Aorta (tissue), 5 donors: ENCODE measurements at regions of chr4 and their contacts with region 1.

Region 1: DNA sequence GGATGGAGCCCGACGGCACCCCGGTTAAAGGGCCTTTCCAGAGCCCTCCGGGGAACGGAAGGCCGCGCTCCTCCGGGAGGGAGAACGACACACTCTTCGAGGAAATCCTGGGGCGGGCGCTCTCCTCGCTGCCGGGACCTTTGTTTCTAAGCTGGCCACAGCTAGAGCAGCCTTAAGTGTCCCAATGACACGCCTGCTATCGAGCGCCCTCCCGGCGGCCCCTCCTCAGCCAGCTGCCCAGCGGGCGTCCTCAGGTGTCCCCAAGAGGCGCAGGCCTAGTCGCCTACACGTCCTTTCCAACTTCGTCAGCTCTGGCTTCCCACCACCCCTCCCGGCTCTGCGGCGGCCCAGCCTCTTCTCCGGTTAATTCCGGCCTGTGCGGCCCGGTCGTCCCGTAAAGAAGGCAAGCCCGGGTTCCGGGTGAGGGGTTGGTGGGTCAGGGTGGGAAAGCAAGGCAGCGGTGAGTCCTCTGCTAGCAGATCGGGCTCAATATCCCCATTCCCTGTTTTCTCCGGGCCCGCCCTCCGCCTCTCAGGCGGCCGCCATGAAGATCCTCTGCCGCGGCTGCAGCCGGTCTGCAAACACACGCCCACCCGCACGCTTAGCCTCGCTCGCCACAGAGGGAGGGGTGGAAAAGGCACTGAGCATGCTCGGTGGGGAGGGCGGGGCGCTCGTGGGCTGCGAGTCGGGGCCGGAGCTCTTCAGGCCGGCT is 449 bp upstream of the RAP1GDS1 start:
- DNase-seq: peak; percentile 98 to 99
- ATAC-seq: peak; percentile 97
- H3K4me3 ChIP-seq: peak overlapping the region; percentile 50 to 65
- H3K27ac ChIP-seq: peak overlapping the region; percentile 56 to 77
- H3K4me1 ChIP-seq: no peaks in the 10 kb centered on the region
- H3K27me3 ChIP-seq: no peaks in the 10 kb centered on the region

Region 2: GRCh38 chr4:98143001-98143899 is 117.5 kb before region 1 on chr4 and contains the start of gene STPG2:
- intact Hi-C with region 1: loop called (anchors 5 to 10 kb)
- DNase-seq: peak; percentile 95 to 97
- ATAC-seq: peak; percentile 97
- H3K4me3 ChIP-seq: peak within 1 kb of the TSS; percentile 44 to 87
- H3K27ac ChIP-seq: no peak within 1 kb of the TSS
- H3K4me1 ChIP-seq: no peaks in the 10 kb centered on the region
- H3K27me3 ChIP-seq: no peaks in the 10 kb centered on the region
- total RNA-seq, gene STPG2: 0.33 to 0.65 TPM

Region 3: GRCh38 chr4:99078931-99079624 is 818.3 kb after region 1 on chr4:
- intact Hi-C with region 1: loop called in 1 of 2 experiments (anchors 10 kb)
- DNase-seq: no peak
- ATAC-seq: no peak
- H3K4me3 ChIP-seq: no peak overlapping the region
- H3K27ac ChIP-seq: no peak overlapping the region
- H3K4me1 ChIP-seq: peaks cover 0 to 2% of the 10 kb centered on the region in 2 donors
- H3K27me3 ChIP-seq: no peaks in the 10 kb centered on the region